Caco-2 (cell line): ENCODE measurements at regions of chr15 and their contacts with region 1.

Region 1: GRCh38 chr15:88701561-88702095 is 62.8 kb downstream of the ISG20 start:
- DNase-seq: peak in 1 of 2 experiments; percentile 33
- H3K4me3 ChIP-seq: no peak overlapping the region
- H3K4me3 Mint-ChIP-seq: no peak overlapping the region
- H3K27ac Mint-ChIP-seq: no peak overlapping the region
- H3K4me1 ChIP-seq: no peaks in the 10 kb centered on the region
- H3K4me1 Mint-ChIP-seq: no peaks in the 10 kb centered on the region
- H3K27me3 ChIP-seq: no peaks in the 10 kb centered on the region
- H3K27me3 Mint-ChIP-seq: peaks cover 38% of the 10 kb centered on the region
- CTCF ChIP-seq: peak in 1 of 2 experiments; percentile 56

Region 2: DNA sequence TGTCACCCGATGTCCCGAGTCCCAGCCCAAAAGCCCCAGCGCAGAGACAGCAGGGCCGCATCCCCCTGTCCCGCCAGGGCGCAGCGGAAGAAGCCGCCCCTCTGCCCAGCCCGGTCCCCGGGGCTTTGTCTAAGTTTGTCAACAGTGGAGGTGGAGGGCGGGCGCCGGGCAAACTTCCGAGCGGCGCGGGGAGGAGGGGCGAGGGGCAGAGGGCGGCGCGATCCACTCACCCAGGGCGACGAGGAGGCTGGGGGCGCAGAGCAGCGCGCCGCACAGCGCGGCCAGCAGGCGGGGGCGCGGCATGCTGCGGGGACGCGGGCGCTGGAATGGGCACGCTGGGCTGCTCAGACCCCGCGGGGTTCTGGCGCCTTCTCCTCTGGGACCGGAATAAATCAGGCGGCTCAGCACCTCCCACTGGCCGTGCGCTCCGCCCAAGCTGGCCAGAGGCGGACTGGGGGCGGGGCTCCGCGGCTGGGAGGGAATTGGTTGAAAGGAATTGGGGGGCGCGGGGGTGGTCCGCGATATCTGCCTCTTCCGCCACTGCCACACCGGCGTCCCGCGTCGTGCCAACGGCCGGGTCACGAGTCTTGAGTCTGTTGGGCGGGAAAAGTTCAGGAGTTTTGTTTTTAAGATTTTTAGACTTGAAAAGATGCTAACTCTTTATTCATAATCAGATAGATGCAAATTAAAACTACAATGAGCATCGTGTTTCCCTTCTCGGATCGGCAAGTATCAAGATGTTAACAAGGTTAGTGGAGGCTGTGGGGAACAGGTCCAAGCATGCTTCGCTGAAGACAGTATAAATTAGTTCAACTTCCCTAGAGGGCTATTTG is 211.6 kb after region 1 on chr15 and contains the start of gene MFGE8:
- CTCF ChIA-PET with region 1: no interaction called
- POLR2A ChIA-PET with region 1: no interaction called
- intact Hi-C with region 1: no loop called
- DNase-seq: peak; percentile 84 to 87
- H3K4me3 ChIP-seq: peak within 1 kb of the TSS; percentile 80
- H3K4me3 Mint-ChIP-seq: peak within 1 kb of the TSS; percentile 91
- H3K27ac Mint-ChIP-seq: peak within 1 kb of the TSS; percentile 88
- H3K4me1 ChIP-seq: peaks cover 15% of the 10 kb centered on the region
- H3K4me1 Mint-ChIP-seq: peaks cover 13% of the 10 kb centered on the region
- H3K27me3 ChIP-seq: no peaks in the 10 kb centered on the region
- H3K27me3 Mint-ChIP-seq: no peaks in the 10 kb centered on the region
- CTCF ChIP-seq: peak in 1 of 2 experiments; percentile 1
- total RNA-seq, gene MFGE8: 409 and 453 TPM in 2 replicates

Region 3: GRCh38 chr15:89093509-89093908 is 391.9 kb after region 1 on chr15:
- CTCF ChIA-PET with region 1: no interaction called
- POLR2A ChIA-PET with region 1: interaction called, 10 read pairs
- intact Hi-C with region 1: no loop called
- DNase-seq: no peak
- H3K4me3 ChIP-seq: no peak overlapping the region
- H3K4me3 Mint-ChIP-seq: no peak overlapping the region
- H3K27ac Mint-ChIP-seq: no peak overlapping the region
- H3K4me1 ChIP-seq: peaks cover 12% of the 10 kb centered on the region
- H3K4me1 Mint-ChIP-seq: peaks cover 32% of the 10 kb centered on the region
- H3K27me3 ChIP-seq: no peaks in the 10 kb centered on the region
- H3K27me3 Mint-ChIP-seq: no peaks in the 10 kb centered on the region
- CTCF ChIP-seq: no peak